ENCODE measurements at regions of chr7 and their contacts with region 1.

Region 1: DNA sequence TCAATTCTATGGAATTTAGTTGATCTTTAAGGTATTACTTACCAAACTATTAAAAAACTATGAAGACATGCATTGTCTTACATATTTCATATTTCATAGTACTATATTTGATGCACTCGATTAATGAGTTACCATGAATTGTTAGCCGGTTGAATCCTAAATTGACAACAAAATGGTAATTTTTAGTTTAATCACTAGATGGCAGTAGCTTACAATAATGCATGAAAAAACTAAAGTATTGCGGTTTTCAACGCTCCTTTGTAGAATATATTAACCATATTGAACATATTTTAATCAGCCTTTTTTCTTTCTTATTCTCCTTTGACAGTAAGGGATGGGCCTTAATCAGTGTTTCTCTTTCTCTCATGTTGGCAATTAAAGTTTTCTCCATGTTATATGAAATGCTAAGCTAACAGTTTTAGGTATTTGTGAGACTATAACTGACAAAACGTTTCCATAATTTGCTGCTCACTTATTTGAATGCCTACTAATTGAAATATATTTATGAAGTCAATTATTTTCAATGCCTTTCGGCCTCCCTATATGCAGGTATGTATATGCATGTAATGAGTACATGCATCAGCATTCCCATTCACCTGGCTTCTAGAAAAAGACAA is 48.5 kb upstream of the ARL4A start:
- DNase-seq: no peak
- H3K4me3 ChIP-seq: no peak overlapping the region
- H3K27me3 ChIP-seq: no peaks in the 10 kb centered on the region
- CTCF ChIP-seq: peak; percentile 46

Region 2: DNA sequence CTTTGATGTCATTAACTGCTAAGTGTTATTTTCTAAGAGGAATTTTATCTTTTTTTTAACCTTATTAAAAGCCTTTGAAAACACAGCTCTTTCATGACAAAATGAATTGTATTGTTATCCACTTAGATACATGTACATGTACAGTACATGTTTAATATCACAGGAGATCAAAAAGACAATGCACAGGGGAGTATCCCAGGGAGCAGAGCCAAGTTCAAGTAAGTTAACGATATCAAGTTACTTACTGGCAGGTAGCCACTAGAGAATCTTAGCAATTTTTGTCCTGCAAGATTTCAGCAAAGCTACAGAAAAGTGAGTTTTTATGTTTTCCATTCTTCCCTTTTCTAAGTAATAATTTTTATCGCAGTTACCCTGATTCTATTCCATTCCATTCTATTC is 14.6 kb after region 1 on chr7:
- CTCF ChIA-PET with region 1: interaction called, 11 read pairs
- POLR2A ChIA-PET with region 1: no interaction called
- DNase-seq: no peak
- H3K4me3 ChIP-seq: no peak overlapping the region
- H3K27me3 ChIP-seq: no peaks in the 10 kb centered on the region
- CTCF ChIP-seq: no peak